Left lung (tissue), 14 donors: ENCODE measurements at regions of chr15 and their contacts with region 1.

Region 1: DNA sequence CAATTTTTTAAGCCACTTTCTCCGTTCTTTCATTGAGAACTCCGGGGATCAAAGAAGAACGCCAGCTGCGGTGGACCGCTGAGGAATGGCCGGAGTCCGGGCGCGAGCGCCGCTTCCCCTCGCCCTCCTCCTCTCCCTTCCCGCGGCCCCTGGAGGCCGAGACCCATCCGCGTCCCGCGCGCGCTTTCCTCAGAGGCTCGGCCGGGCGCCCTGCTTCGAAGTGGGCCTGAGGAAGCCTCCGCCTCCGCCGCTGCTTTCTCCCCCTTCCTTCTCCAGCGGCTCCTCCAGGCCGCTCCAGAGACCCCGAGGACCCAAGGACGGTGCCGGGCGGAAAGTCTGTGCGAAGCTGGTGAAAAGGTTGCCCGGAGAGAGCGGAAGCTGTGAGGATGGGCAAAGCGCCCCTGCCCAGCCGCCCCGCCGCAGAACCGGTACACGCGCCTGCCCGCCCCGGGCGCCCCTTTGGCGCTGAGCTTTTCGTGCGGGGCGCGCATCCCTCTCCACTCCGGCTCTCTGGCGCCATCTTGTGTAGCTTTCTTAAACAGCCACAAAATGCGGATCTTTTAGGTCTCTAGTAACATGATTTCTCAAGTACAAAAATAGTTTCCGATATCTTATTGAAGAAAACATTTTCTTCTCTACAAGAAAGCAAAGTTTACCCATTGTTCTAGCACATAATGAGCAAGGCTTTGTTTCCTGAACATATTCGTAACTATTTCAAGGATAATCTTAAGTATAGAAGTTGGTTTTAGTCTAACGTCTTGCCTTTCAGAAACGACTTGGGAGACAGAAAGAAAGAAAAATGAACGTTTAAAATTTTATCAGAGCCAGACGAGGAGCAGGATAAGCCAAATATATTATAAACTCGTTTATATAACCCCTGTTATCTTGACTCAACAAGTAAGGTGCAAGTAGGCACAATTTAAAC is 59.2 kb upstream of the FAM174B start:
- DNase-seq: peak; percentile 70 to 90 (median 89)
- ATAC-seq: peak; percentile 97
- H3K4me3 ChIP-seq: peak overlapping the region; percentile 47 to 53
- H3K27ac ChIP-seq: peak overlapping the region; percentile 48 to 76
- H3K4me1 ChIP-seq: peaks cover 0 to 13% of the 10 kb centered on the region in 2 donors
- H3K27me3 ChIP-seq: peaks cover 0 to 5% of the 10 kb centered on the region in 2 donors
- CTCF ChIP-seq: peak; percentile 75 to 88

Region 2: DNA sequence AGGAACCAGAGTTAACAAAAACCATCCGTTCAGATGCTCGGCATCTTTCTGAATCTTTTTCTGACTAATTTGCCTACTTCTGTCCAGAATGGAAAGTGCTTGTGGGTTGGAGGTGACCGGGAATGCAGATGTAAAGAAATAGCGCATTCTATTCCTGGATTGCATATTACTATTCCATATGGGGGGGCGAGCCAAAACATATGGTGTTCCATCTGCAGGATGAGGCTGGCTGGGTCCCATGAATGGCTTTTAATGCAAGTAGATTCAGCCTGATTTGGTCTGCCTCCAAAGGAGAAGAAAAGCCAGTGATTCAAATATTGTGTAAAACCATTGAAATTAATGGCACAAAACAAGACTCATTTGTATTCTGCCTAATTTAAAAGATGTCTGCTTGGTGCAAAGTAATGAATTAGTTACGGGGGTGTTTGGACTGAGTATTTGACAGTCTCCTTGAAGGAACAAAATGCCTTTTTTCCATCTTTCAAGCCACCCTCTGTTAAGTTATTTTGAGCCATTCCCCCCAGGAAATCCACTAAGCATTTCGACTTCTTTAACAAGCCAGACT is 222.1 kb before region 1 on chr15:
- intact Hi-C with region 1: no loop called
- DNase-seq: no peak
- ATAC-seq: no peak
- H3K4me3 ChIP-seq: no peak overlapping the region
- H3K27ac ChIP-seq: no peak overlapping the region
- H3K4me1 ChIP-seq: no peaks in the 10 kb centered on the region
- H3K27me3 ChIP-seq: peaks cover 0 to 27% of the 10 kb centered on the region in 2 donors
- CTCF ChIP-seq: no peak

Region 3: DNA sequence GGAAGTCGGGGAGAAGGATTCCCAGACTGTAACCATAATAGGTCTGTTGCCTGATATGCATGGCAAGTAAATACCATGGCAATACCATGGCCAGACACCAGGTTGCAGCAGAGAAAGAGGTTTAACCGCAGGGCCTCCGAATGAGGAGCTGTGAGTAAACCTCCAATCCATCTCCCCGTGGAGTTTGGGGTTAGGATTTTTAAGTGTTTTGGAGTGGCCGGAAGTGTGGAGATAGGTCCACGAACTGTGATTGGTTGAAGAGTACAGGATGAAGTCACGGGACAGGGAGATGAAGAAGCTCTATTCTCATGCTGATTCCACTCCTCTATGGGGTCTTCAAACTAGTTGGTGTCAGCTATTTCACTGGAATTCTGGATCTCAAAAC is 193.1 kb before region 1 on chr15:
- intact Hi-C with region 1: loop called in 1 of 2 experiments (anchors 5 kb)
- DNase-seq: peak in 3 of 4 donors; percentile 60 to 91 (median 78)
- ATAC-seq: peak; percentile 99
- H3K4me3 ChIP-seq: no peak overlapping the region
- H3K27ac ChIP-seq: no peak overlapping the region
- H3K4me1 ChIP-seq: peaks cover 0 to 6% of the 10 kb centered on the region in 2 donors
- H3K27me3 ChIP-seq: no peaks in the 10 kb centered on the region
- CTCF ChIP-seq: peak; percentile 69 to 74

Region 4: GRCh38 chr15:92565351-92566125 is 149.2 kb before region 1 on chr15:
- intact Hi-C with region 1: no loop called
- DNase-seq: no peak
- ATAC-seq: no peak
- H3K4me3 ChIP-seq: no peak overlapping the region
- H3K27ac ChIP-seq: no peak overlapping the region
- H3K4me1 ChIP-seq: no peaks in the 10 kb centered on the region
- H3K27me3 ChIP-seq: no peaks in the 10 kb centered on the region
- CTCF ChIP-seq: no peak

Region 5: GRCh38 chr15:92864127-92864814 is 149.5 kb after region 1 on chr15:
- intact Hi-C with region 1: no loop called
- DNase-seq: no peak
- ATAC-seq: no peak
- H3K4me3 ChIP-seq: no peak overlapping the region
- H3K27ac ChIP-seq: no peak overlapping the region
- H3K4me1 ChIP-seq: no peaks in the 10 kb centered on the region
- H3K27me3 ChIP-seq: no peaks in the 10 kb centered on the region
- CTCF ChIP-seq: no peak

Region 6: GRCh38 chr15:93035953-93036800 is 321.4 kb after region 1 on chr15:
- intact Hi-C with region 1: no loop called
- DNase-seq: peak in 3 of 4 donors; percentile 52 to 80 (median 60)
- ATAC-seq: peak; percentile 66
- H3K4me3 ChIP-seq: no peak overlapping the region
- H3K27ac ChIP-seq: no peak overlapping the region
- H3K4me1 ChIP-seq: peaks cover 4 to 41% of the 10 kb centered on the region in 2 donors
- H3K27me3 ChIP-seq: no peaks in the 10 kb centered on the region
- CTCF ChIP-seq: peak; percentile 40 to 52